Right ventricle myocardium inferior (tissue), 1 donor: ENCODE measurements at regions of chr13 and their contacts with region 1.

Region 1: GRCh38 chr13:110379905-110380341 is 72.8 kb downstream of the COL4A2 start:
- DNase-seq: no peak
- ATAC-seq: no peak

Region 2: DNA sequence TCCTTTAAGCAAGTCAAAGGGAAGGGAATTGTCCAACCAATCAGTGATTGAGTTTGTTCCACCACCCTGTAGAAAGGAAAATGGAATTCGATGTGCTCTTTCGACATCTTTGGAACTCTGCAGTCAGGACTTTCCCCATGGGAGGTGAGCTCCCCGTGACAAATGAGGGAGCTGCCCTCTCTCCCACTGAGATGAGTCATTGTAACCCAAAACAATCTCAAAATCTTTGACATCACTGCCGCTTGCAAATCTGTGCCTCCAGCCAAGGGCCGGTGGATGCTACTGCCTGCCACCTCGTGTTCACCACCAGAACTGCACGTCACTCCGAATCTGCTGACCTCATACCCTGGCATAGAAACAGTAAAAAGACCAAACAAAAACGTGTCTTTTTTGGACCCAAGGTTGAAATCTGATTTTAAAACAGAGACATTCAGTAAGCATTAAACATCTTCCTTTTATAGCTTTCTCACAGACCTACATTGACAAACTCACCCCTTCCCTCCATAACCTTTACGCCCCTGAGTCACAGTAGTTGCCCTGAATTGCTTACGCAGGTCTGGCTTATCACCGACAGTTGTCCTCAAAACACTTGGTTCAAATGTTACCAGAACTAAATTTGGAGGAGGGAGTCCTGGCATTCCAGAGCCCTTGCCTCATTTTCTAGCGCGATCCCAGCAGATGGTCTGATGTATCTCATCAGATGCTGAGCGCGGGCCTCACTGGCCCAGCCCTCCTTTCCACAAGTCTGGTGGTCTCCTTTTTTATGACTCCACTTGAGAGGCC is 32.4 kb after region 1 on chr13:
- intact Hi-C with region 1: loop called (anchors 5 kb)
- DNase-seq: peak; percentile 91
- ATAC-seq: peak; percentile 85

Region 3: GRCh38 chr13:110433014-110433413 is 53.1 kb after region 1 on chr13:
- intact Hi-C with region 1: loop called (anchors 5 kb)
- DNase-seq: peak; percentile 68
- ATAC-seq: peak; percentile 43